Activated T-helper 1 cell treated with anti-CD3 and anti-CD28 coated beads, Interleukin-12 subunit alpha, Interleukin-12 subunit beta, Interleukin-2, Interleukin-4 antibody, amounts not matched to agents 30 ng/mL and 10 ng/mL and 1 ng/mL, durations not matched to agents 14 hours and 24 hours and 36 hours (primary cell): ENCODE measurements at regions of chr18 and their contacts with region 1.

Region 1: DNA sequence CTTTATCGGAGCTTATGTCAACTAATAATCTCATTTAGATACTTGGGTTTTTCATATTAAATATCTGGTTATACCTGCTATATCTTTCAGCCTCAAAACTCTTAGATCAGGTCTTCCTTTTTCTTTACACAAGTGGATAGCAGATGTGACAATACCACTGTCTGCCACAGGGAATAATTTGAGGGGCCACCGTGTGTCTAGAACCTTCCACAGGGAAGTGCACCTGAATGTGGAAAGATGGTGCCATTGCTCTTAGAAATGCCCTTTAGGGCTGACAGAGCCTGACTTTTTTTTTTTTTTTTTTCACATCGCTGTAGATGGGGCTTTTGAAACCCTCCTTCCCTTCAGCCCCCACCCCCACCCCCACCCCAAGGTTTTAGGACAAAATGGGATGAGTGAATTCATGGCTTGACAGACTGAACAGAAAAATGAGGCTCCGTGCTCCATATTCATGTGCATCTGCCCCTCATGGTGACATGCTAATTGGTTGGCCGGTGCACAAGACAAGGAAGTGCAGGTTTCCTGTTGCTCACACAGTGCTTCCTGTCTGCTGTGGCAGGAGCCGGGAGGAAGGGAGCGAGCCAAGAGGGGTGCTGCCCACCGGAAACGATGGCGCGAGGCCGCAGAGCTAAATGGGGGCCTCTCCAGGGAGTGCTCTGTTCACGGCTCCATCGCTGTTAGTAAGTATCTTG is 246.0 kb downstream of the LDLRAD4 start:
- DNase-seq: peak; percentile 59
- H3K4me3 Mint-ChIP-seq: peak overlapping the region; percentile 90
- H3K27ac Mint-ChIP-seq: peak overlapping the region; percentile 90
- H3K4me1 Mint-ChIP-seq: peaks cover 60% of the 10 kb centered on the region
- H3K27me3 Mint-ChIP-seq: no peaks in the 10 kb centered on the region

Region 2: GRCh38 chr18:13500227-13500865 is 35.8 kb after region 1 on chr18:
- intact Hi-C with region 1: loop called (anchors 5 kb)
- DNase-seq: no peak
- H3K4me3 Mint-ChIP-seq: no peak overlapping the region
- H3K27ac Mint-ChIP-seq: no peak overlapping the region
- H3K4me1 Mint-ChIP-seq: peaks cover 32% of the 10 kb centered on the region
- H3K27me3 Mint-ChIP-seq: no peaks in the 10 kb centered on the region

Region 3: DNA sequence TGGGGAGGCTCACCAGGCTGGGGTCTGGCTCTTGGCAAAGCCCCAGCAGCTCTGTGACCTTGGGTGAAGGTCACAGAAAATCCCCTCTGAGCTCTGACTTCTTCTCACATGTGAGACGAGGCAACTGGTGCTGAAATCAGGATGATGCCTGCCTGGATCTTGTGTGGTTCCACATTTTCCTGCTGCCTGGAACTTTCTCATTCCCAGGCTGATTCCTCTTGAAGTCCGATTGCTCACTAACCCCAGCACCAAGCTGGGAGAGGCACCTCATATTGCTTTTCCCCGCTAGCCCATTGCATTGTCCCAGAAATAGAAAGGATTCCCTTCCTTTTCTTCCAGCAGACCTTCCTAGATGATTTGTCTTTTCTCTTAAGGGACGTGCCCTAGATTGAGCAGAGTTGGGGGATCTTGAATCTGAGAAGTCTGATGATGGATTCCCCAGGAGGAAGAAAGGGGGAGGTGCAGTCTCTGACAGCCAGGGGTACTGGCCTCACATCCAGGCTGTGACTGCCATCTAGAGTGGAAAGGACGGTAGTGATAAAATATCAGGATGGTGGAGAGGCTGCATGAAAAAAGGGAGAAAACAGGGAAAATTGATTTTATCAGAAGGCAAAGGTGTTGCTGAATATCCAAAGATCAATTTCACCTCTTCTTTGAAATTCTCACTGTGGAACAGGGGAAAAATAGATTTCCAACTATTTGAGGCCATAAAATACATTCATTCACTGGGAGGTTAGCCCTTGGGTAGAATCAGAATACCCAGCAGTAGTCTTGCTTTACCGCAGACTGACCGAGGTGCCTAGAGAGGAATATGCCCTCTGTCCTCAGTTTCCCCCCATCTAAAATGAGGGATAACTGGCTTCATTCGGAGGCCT is 165.5 kb after region 1 on chr18:
- intact Hi-C with region 1: loop called (anchors 5 kb)
- DNase-seq: no peak
- H3K4me3 Mint-ChIP-seq: no peak overlapping the region
- H3K27ac Mint-ChIP-seq: no peak overlapping the region
- H3K4me1 Mint-ChIP-seq: peaks cover 15% of the 10 kb centered on the region
- H3K27me3 Mint-ChIP-seq: no peaks in the 10 kb centered on the region